ENCODE measurements at regions of chrX and their contacts with region 1.

Region 1: GRCh38 chrX:84046403-84046984 is 141.5 kb downstream of the RPS6KA6 start:
- DNase-seq: peak in 1 of 2 experiments; percentile 36
- H3K4me3 ChIP-seq: no peak overlapping the region
- H3K4me3 Mint-ChIP-seq: no peak overlapping the region
- H3K27ac Mint-ChIP-seq: peak overlapping the region; percentile 12
- H3K4me1 ChIP-seq: no peaks in the 10 kb centered on the region
- H3K4me1 Mint-ChIP-seq: peaks cover 7% of the 10 kb centered on the region
- H3K27me3 ChIP-seq: no peaks in the 10 kb centered on the region
- H3K27me3 Mint-ChIP-seq: no peaks in the 10 kb centered on the region
- CTCF ChIP-seq: peak; percentile 49 to 57

Region 2: DNA sequence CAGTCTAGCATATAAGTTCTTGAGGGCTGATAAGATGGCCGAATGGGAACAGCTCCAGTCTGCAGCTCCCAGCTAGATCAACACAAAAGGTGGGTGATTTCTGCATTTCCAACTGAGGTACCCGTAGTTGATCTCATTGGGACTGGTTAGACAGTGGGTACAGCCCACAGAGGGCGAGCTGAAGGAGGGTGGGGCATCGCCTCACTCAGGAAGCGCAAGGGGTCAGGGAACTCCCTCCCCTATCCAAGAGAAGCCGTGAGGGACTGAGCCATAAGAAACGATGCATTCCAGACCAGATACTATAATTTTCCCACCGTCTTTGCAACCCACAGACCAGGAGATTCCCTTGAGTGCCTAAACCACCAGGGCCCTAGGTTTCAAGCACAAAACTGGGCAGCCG is 32.5 kb after region 1 on chrX:
- CTCF ChIA-PET with region 1: no interaction called
- POLR2A ChIA-PET with region 1: no interaction called
- intact Hi-C with region 1: no loop called
- DNase-seq: no peak
- H3K4me3 ChIP-seq: no peak overlapping the region
- H3K4me3 Mint-ChIP-seq: no peak overlapping the region
- H3K27ac Mint-ChIP-seq: no peak overlapping the region
- H3K4me1 ChIP-seq: no peaks in the 10 kb centered on the region
- H3K4me1 Mint-ChIP-seq: no peaks in the 10 kb centered on the region
- H3K27me3 ChIP-seq: no peaks in the 10 kb centered on the region
- H3K27me3 Mint-ChIP-seq: no peaks in the 10 kb centered on the region
- CTCF ChIP-seq: no peak

Region 3: DNA sequence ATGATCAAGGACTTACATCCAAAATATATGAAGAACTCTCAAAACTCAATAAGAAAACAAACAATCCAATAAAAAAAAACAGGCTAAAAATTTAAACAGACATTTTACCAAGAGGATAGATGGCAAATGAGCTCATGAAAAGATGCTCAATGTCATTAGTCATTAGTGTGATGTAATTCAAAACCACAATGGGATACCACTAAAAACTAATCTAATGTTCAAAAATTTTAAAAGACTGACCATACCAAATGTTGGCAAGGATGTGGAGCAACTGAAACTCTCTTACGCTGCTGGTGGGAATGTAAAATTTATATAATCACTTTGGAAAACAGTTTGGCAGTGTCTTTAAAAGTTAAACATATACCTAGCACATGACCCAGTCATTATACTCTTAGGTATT is 97.8 kb after region 1 on chrX:
- CTCF ChIA-PET with region 1: no interaction called
- POLR2A ChIA-PET with region 1: no interaction called
- intact Hi-C with region 1: no loop called
- DNase-seq: no peak
- H3K4me3 ChIP-seq: no peak overlapping the region
- H3K4me3 Mint-ChIP-seq: no peak overlapping the region
- H3K27ac Mint-ChIP-seq: no peak overlapping the region
- H3K4me1 ChIP-seq: no peaks in the 10 kb centered on the region
- H3K4me1 Mint-ChIP-seq: no peaks in the 10 kb centered on the region
- H3K27me3 ChIP-seq: no peaks in the 10 kb centered on the region
- H3K27me3 Mint-ChIP-seq: no peaks in the 10 kb centered on the region
- CTCF ChIP-seq: no peak

Region 4: DNA sequence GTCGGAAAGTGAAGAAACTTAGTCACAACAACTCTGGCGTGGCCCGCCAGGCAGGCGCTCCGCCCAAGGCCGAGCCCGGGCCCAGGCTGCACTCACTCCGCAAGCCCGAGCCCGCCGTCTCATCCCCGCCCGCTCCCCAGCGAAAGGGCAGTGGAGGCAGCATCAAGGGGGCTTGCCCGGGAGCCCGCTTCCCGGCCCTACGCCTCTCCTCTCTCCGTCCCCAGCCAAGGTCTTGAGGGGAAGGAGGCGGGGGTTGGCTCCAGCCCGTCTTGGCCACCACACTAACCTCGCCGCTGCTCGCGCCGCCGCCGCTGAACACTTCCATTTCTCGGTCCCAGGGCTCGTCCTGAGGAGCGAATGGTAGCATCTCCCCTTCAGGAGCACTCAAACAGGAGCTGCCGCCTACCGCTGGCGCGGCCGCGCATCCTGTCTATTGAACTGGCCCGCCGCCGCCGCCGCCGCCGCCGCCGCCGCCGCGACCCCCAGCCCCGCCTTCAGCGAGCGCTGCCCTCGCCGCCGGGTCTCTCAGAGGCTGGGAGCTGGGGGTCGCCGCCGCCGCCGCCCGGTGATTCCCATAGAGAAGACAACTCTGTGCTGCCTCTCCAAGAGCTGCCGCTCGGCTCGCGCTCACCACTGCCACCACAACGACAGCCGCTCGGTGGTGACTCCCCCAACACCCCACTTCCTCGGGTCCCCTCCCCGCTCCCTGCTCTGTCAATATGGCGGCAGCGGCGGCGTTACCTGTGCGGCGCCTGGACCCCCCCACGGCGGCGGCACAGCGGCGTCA is 141.2 kb after region 1 on chrX and contains the start of gene RPS6KA6:
- CTCF ChIA-PET with region 1: interaction called, 4 read pairs
- POLR2A ChIA-PET with region 1: no interaction called
- intact Hi-C with region 1: loop called (anchors 1 kb)
- DNase-seq: peak; percentile 29 to 43
- H3K4me3 ChIP-seq: peak within 1 kb of the TSS; percentile 42
- H3K4me3 Mint-ChIP-seq: peak within 1 kb of the TSS; percentile 90
- H3K27ac Mint-ChIP-seq: peak within 1 kb of the TSS; percentile 45
- H3K4me1 ChIP-seq: 0 out of 2 replicates have a peak, but pooled peaks cover 4% of the 10 kb centered on the region
- H3K4me1 Mint-ChIP-seq: peaks cover 17% of the 10 kb centered on the region
- H3K27me3 ChIP-seq: no peaks in the 10 kb centered on the region
- H3K27me3 Mint-ChIP-seq: no peaks in the 10 kb centered on the region
- CTCF ChIP-seq: no peak
- total RNA-seq, gene RPS6KA6: 8.7 and 9.2 TPM in 2 replicates